IMR-90 (cell line): ENCODE measurements at regions of chr6 and their contacts with region 1.

Region 1: DNA sequence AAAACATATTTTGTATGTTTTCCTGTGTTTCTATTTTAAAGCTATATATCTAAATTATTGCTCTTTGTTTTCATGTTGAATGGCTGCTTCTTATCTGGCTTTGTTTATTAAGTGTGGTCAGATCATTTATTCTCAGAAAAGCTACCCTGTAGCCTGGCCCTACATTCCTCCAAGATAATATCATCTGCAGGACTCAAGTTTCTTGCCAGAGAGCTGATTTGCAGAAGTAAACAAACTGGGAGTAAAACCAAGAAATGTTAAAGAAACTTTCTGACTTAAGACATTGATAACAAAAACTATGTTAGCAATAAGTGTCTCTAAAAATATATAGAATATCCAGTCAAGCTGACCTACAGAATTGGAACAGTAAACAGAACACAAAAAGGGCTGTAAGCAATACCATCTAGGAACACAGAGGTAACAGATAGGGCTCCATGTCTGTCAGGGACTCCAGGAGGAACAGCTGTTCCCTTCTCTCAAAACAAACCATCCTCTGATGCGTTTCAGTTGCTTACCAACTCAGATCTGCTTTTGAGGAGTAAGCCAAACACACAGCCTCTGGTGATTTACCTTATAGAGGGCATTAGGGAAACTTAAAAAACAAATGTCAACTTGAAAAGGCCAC is 17.5 kb upstream of the CEP85L start:
- DNase-seq: peak; percentile 85
- ATAC-seq: peak; percentile 92
- H3K4me3 ChIP-seq: no peak overlapping the region
- H3K27ac ChIP-seq: peak overlapping the region; percentile 83; the same call in 1 of the 2 replicates
- H3K4me1 ChIP-seq: peaks cover 9% of the 10 kb centered on the region
- H3K27me3 ChIP-seq: no peaks in the 10 kb centered on the region
- CTCF ChIP-seq: no peak
- POLR2A ChIP-seq: no peak
- RAD21 ChIP-seq: no peak

Region 2: GRCh38 chr6:118580585-118581419 is 88.1 kb before region 1 on chr6:
- CTCF ChIA-PET with region 1: no interaction called
- POLR2A ChIA-PET with region 1: no interaction called
- dilution Hi-C with region 1: no loop called
- in situ Hi-C with region 1: no loop called
- intact Hi-C with region 1: no loop called
- DNase-seq: peak; percentile 78
- ATAC-seq: peak; percentile 76
- H3K4me3 ChIP-seq: no peak overlapping the region
- H3K27ac ChIP-seq: no peak overlapping the region
- H3K4me1 ChIP-seq: peaks cover 8% of the 10 kb centered on the region
- H3K27me3 ChIP-seq: no peaks in the 10 kb centered on the region
- CTCF ChIP-seq: peak; percentile 77
- POLR2A ChIP-seq: no peak
- RAD21 ChIP-seq: peak; percentile 80

Region 3: DNA sequence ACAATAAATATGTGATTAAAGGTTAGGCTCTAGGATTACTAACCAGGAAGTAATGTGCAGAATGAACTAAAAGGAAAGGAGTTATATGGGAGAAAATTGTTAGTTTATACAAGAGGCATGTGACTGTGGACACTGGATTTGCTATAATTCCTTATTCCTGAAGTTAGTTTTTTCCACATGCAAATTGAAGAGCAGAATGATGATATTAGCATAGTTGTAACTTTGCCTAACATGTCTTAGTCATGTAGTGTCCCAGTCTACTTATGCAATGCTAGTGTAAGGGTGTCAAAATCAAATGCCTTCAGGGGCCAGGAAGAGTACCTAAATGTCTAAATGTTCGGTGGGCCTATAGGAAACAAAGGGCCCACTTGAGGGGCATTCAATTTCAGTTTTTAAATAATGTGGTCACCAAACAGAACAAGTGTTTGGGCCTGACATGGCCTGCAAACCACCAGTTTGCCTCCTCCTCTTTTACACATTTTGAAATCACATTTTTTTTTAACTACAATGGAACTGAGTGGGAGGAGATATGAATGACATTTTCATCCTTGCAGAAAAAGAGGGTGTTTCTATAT is 10.5 kb after region 1 on chr6:
- CTCF ChIA-PET with region 1: interaction called, 4 read pairs
- POLR2A ChIA-PET with region 1: no interaction called
- dilution Hi-C with region 1: no loop called
- in situ Hi-C with region 1: no loop called
- intact Hi-C with region 1: loop called (anchors 1 kb)
- DNase-seq: peak; percentile 55
- ATAC-seq: peak; percentile 40; the same call in 1 of the 2 replicates
- H3K4me3 ChIP-seq: no peak overlapping the region
- H3K27ac ChIP-seq: no peak overlapping the region
- H3K4me1 ChIP-seq: no peaks in the 10 kb centered on the region
- H3K27me3 ChIP-seq: no peaks in the 10 kb centered on the region
- CTCF ChIP-seq: no peak
- POLR2A ChIP-seq: no peak
- RAD21 ChIP-seq: no peak

Region 4: DNA sequence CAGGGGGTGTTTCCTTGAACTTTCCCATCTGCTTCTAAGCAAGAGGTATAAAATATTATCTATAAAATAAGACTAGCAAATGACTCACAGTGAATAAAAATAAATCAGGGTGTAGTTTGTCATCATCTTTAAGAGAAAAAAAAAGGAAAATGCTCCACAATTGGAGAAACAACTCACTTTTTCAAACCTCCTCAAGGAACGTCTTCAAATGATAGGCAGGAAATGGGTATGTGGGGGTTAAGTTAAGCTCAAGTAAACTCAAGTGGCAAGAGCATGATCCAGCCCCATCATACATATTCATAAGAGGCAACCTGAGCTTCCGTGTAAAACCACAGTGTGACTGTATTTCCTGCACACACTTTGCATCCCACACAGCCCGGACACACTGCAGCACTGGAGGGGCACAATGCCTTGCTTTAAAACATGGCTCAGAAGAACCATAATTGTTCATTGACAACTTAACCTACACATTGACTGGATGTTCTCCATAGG is 41.0 kb after region 1 on chr6:
- CTCF ChIA-PET with region 1: no interaction called
- POLR2A ChIA-PET with region 1: interaction called, 3 read pairs
- dilution Hi-C with region 1: no loop called
- in situ Hi-C with region 1: no loop called
- intact Hi-C with region 1: loop called (anchors 5 kb)
- DNase-seq: peak; percentile 86
- ATAC-seq: peak; percentile 30; the same call in 1 of the 2 replicates
- H3K4me3 ChIP-seq: peak overlapping the region; percentile 30; the same call in 1 of the 2 replicates
- H3K27ac ChIP-seq: peak overlapping the region; percentile 67
- H3K4me1 ChIP-seq: peaks cover 10% of the 10 kb centered on the region
- H3K27me3 ChIP-seq: no peaks in the 10 kb centered on the region
- CTCF ChIP-seq: no peak
- POLR2A ChIP-seq: no peak
- RAD21 ChIP-seq: no peak